ENCODE measurements at regions of chr7 and their contacts with region 1.

Region 1: DNA sequence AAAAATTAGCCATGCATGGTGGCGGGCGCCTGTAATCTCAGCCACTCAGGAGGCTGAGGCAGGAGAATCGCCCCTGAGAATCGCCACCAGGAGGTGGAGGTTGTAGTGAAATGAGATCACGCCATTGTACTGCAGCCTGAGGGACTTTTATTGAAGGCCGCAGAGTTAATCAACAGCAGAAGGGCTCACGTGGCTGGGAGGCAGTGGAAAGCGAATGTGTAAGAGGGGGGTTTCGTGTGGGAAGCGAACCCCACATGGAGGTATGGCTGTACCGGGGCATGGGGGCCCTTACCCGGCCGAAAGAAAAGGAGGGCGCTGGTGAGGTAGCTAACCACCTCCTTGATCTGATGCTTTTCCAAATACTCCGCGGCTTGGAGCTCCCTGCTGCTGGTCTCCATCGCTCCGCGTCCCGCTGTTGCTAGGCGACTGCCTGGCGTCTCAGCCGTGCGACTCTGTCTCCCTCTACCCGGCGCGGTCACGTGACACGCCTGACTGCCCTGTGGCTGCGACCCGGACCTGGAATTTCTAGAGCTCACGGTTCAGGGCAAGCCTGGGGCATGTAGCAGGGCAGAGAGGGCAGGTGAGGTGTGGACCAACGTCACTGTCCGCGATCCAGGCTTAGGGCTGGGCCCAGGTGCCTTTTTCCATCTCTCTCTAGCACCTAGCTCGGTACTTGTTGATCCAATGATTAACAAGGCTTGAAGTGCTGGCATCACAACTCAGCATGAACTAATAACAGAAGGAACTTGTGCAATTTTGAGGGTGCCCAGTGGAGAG is at the start of gene EFCAB10:
- DNase-seq: peak; percentile 97
- ATAC-seq: peak; percentile 96
- H3K4me3 Mint-ChIP-seq: peak within 1 kb of the TSS; percentile 77
- H3K27ac Mint-ChIP-seq: peak within 1 kb of the TSS; percentile 93
- H3K4me1 Mint-ChIP-seq: peaks cover 20% of the 10 kb centered on the region
- H3K27me3 Mint-ChIP-seq: peaks cover 4% of the 10 kb centered on the region; the same call in 1 of the 2 replicates
- CTCF ChIP-seq: no peak
- total RNA-seq, gene EFCAB10: 3.0 to 3.2 TPM (median 3.0 TPM) in 3 replicates

Region 2: DNA sequence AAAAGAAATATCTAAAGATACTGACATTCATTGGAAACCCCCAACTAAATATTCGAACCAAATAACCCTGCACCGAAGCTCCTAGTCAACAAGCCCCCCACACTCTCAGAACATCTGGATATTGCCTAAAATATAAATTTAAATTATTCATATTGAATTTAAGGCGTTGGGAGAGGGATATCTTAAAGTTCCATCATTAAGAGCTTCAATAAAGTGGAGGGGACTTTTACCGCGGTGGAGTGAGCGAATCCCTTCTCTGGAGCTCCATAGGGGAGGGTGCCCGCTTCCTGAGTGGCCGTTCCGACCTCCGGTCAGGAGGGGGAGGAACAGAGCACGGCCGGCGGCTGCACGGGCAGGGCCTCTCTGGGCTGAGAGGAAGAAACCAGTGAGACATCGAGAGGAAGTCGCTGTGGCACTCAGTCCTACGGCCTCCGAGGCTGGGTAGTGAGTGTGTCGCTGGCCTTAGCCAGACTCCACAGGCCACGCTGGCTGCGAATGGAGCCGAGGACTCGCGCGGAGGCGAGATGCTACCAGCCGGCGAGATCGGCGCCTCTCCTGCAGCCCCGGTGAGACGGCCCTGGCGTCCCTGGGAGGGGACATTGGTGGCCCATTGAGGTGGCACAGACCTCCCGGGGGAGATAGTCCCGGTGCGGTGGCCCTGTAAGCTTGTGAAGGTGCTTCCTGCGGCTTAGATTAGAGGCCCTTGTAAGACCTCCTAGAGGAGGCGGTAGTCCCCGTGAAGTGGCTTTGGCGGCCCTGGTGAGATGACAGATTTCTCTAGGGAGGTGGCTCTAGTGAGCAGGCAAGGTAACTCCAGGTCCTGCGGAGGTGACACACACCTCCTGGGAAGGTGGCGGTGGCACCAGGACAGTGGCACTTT is 49.2 kb before region 1 on chr7 and contains the start of gene RINT1:
- CTCF ChIA-PET with region 1: interaction called, 17 read pairs
- POLR2A ChIA-PET with region 1: interaction called, 3 read pairs
- DNase-seq: peak; percentile 90
- ATAC-seq: peak; percentile 100
- H3K4me3 Mint-ChIP-seq: peak within 1 kb of the TSS; percentile 94
- H3K27ac Mint-ChIP-seq: peak within 1 kb of the TSS; percentile 41
- H3K4me1 Mint-ChIP-seq: peaks cover 12% of the 10 kb centered on the region
- H3K27me3 Mint-ChIP-seq: no peaks in the 10 kb centered on the region
- CTCF ChIP-seq: no peak
- total RNA-seq, gene RINT1: 20.3 to 26.6 TPM (median 23.1 TPM) in 3 replicates

Region 3: GRCh38 chr7:105621617-105622016 is 40.4 kb after region 1 on chr7:
- CTCF ChIA-PET with region 1: no interaction called
- POLR2A ChIA-PET with region 1: no interaction called
- DNase-seq: no peak
- ATAC-seq: no peak
- H3K4me3 Mint-ChIP-seq: no peak overlapping the region
- H3K27ac Mint-ChIP-seq: peak overlapping the region; percentile 50
- H3K4me1 Mint-ChIP-seq: peaks cover 16% of the 10 kb centered on the region
- H3K27me3 Mint-ChIP-seq: 0 out of 2 replicates have a peak, but pooled peaks cover 3% of the 10 kb centered on the region
- CTCF ChIP-seq: no peak